Activated CD4-positive, alpha-beta memory T cell treated with anti-CD3 and anti-CD28 coated beads, Interleukin-2, amount 10 ng/mL, durations not matched to agents 7 days and 5 days (primary cell): ENCODE measurements at regions of chr19 and their contacts with region 1.

Region 1: GRCh38 chr19:35740423-35741202 is 1.6 kb downstream of the IGFLR1 start:
- DNase-seq: peak; percentile 97
- H3K4me3 Mint-ChIP-seq: peak overlapping the region; percentile 81
- H3K27ac Mint-ChIP-seq: peak overlapping the region; percentile 88
- H3K4me1 Mint-ChIP-seq: peaks cover 49% of the 10 kb centered on the region
- H3K27me3 Mint-ChIP-seq: no peaks in the 10 kb centered on the region

Region 2: GRCh38 chr19:35693830-35694599 is 46.6 kb before region 1 on chr19:
- CTCF ChIA-PET with region 1: interaction called, 12 read pairs
- POLR2A ChIA-PET with region 1: interaction called, 5 read pairs
- DNase-seq: peak; percentile 93
- H3K4me3 Mint-ChIP-seq: no peak overlapping the region
- H3K27ac Mint-ChIP-seq: peak overlapping the region; percentile 52
- H3K4me1 Mint-ChIP-seq: peaks cover 19% of the 10 kb centered on the region
- H3K27me3 Mint-ChIP-seq: peaks cover 3% of the 10 kb centered on the region

Region 3: DNA sequence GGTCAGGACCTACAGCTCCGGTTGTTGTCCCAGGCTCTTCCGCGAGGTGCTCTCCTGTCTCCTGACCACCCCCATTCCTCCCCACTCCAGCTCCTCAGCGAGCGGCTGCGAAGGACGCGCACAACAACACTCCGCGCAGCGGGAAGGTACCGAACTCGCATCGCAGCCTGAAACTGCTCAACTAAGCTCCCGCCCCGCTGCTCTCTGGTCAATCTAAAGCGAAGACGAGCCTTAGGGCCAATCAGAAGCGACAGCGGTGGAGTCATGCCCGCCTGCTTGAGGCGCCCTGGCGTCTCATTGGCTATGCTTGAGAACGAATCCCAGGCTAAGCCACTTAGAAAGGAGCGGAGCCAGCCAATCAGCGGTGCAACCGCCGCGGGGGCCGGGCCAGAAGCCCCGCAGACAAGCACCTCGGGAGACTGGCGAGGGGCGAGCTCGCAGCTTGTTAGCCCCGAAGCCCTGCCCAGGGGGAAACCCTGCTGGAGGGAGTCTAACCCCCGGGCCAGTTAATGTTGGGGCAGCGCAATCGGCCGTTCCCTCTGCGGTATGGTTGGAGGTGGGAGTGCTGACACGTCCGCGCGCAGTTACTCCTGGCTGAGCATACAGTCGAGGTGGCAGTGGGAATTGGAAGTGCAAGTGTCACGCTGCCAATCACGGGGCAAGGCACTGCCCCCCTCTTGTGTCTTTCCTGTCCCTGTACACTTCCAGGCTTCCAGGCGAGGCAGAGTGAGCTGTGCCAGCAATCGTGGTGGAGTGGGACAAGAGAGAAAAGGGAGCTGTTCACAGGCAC is 38.2 kb before region 1 on chr19:
- CTCF ChIA-PET with region 1: interaction called, 4 read pairs
- POLR2A ChIA-PET with region 1: interaction called, 17 read pairs
- DNase-seq: peak; percentile 97
- H3K4me3 Mint-ChIP-seq: peak overlapping the region; percentile 90
- H3K27ac Mint-ChIP-seq: peak overlapping the region; percentile 98
- H3K4me1 Mint-ChIP-seq: peaks cover 19% of the 10 kb centered on the region
- H3K27me3 Mint-ChIP-seq: no peaks in the 10 kb centered on the region

Region 4: DNA sequence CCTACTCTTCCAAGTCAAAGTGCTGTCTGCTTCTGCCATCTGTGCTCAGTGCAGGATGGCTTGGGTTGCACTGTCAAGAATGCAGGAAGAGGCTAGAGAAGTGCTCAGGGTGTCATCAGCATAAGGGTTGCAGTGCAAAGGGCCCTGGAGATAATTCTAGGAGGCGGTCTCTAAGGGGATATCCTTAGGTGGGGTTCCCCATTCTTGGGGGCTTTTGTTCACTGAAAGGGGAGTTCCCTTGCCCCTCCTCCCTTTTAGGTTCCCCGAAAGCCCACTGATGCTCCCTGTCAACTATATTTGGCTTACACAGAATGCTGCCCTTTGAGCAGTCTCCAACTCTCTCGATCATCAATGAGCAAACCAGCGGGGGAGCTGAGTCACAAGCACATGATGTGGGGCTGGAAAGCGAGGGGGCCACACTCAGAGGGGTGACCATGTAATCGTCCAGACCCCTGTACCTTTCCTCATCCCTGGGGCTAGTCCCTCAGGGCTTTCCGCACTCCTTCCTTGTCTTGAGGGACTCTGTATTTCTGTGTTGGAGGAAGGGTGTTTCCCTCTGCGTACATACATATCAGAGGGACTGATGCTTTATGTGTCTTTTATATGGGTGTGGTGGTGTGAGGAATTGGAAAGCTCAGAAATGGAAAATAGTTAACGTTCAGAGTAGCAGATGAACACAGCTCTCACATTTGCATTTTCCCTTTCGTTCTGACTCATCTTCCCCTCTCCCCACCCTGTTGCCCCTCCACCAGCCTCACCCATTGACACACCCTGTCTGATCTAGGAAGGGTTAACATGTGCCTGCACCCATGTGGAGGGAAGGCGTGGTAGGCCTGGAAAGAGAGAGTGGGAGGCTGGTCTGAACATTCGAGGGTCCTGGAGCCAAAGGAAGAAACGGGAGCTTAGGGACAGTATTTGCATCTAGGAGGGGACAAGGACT is 29.6 kb before region 1 on chr19:
- CTCF ChIA-PET with region 1: interaction called, 6 read pairs
- POLR2A ChIA-PET with region 1: interaction called, 46 read pairs
- DNase-seq: peak; percentile 72
- H3K4me3 Mint-ChIP-seq: peak overlapping the region; percentile 64
- H3K27ac Mint-ChIP-seq: peak overlapping the region; percentile 99
- H3K4me1 Mint-ChIP-seq: peaks cover 64% of the 10 kb centered on the region
- H3K27me3 Mint-ChIP-seq: no peaks in the 10 kb centered on the region

Region 5: GRCh38 chr19:35716801-35717666 is 23.6 kb before region 1 on chr19:
- CTCF ChIA-PET with region 1: interaction called, 5 read pairs
- POLR2A ChIA-PET with region 1: interaction called, 46 read pairs
- DNase-seq: peak; percentile 97
- H3K4me3 Mint-ChIP-seq: peak overlapping the region; percentile 92
- H3K27ac Mint-ChIP-seq: peak overlapping the region; percentile 99
- H3K4me1 Mint-ChIP-seq: peaks cover 60% of the 10 kb centered on the region
- H3K27me3 Mint-ChIP-seq: no peaks in the 10 kb centered on the region

Region 6: DNA sequence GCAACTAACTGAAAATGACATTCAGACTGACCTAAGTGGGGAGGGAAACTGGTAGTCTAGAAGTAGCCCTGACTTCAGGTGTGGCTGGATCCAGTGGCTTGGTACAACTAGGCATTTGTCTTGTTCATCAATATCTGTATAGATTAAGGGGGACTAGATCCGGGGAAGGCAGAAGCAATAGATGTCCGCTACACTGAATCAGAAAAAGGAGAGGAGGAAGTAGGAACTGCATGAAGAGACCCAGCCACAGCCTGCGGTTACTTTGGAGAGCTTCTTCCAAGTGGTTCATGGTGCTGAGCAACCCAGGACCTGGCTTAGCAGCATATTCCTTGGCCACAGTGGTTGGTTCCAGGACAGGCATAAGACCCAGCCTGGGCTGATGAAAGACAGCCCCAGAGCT is 82.0 kb after region 1 on chr19:
- CTCF ChIA-PET with region 1: interaction called, 10 read pairs
- POLR2A ChIA-PET with region 1: interaction called, 3 read pairs
- DNase-seq: no peak
- H3K4me3 Mint-ChIP-seq: no peak overlapping the region
- H3K27ac Mint-ChIP-seq: no peak overlapping the region
- H3K4me1 Mint-ChIP-seq: peaks cover 5% of the 10 kb centered on the region
- H3K27me3 Mint-ChIP-seq: peaks cover 12% of the 10 kb centered on the region